ENCODE measurements at regions of chr14 and their contacts with region 1.

Region 1: GRCh38 chr14:76956316-76957090 is 72.0 kb downstream of the IRF2BPL start:
- DNase-seq: peak; percentile 92 to 95
- ATAC-seq: peak; percentile 82

Region 2: GRCh38 chr14:76742966-76743365 is 213.5 kb before region 1 on chr14:
- intact Hi-C with region 1: no loop called
- DNase-seq: no peak
- ATAC-seq: no peak

Region 3: GRCh38 chr14:77023001-77023996 is 66.8 kb after region 1 on chr14:
- intact Hi-C with region 1: loop called in 1 of 2 experiments (anchors 5 kb)
- DNase-seq: peak; percentile 70 to 77
- ATAC-seq: peak; percentile 71

Region 4: DNA sequence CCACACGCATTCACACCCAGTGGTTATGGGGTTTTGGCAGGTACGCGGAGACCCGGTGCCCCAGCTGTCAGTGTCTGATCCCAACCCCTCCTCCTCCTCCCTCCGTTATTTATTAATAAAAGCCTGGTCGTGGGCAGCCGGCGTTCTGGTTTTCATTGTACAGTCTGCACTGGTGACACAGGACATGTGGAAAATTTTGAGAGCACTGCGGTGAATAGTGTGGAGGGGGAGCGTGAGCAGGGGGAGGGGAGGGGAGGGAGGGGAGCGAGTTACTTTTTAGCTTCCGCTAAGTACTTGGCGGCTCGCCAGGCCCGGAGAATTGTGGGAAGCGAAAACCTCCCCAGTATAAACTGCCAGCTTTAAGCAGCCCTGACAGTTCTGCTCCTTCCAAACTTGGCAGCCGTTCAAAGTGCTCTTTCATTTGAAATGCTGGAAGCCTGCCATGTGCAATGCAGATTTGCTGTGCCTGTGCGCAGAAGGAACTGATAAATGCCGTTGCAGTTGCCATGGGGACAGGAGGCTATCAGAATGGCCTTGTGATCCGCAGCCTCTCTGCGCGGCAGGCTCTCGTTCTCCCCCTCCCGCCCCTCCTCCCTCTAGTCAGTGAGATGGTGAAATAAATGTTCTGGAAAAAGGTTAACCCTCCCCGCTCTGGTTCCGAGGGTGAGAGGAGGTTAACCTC is 83.7 kb after region 1 on chr14:
- intact Hi-C with region 1: loop called in 1 of 2 experiments (anchors 5 kb)
- DNase-seq: peak; percentile 99 to 100
- ATAC-seq: peak; percentile 90

Region 5: DNA sequence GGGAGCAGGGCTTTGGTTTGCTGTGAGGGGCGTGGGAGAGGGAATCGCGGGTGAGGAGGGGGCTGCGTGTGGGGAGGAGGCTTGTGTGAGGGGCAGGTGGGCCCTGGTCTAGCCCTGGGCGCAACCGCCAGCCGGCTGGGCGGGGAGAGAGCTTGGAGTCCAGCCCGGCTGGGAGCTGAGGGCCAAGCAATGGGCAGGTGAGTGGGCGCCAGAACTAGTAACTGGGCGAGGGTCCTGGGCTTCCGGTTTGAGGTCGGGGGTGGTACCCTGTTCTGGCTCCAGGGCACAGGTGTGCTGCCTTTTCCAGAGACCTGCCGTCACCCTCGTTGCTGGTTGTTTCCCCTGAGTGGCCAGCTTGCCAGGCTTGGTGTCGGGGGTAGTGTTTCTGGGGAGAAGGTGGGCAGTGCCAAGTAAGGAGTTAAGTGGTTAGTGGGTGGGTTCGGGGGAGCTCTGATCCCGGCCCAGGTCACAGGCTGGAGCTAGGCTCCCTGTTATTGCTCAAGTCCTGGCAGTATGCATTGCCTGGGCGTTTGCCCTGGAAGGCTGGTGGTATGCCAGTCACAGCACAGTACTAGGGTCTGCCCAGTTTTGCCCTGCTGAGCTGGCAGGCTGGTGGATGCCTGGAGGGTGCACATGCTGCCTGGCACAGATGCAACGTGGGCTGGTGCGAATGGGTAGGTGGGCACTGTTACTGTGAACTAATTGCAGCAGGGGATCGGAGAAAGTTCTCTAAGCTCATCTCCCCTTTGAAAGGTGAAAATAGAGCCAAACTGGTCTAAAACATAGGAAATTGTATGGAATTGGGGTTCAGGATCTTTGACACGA is 142.2 kb after region 1 on chr14:
- intact Hi-C with region 1: no loop called
- DNase-seq: peak; percentile 68 to 69
- ATAC-seq: peak; percentile 35

Region 6: GRCh38 chr14:77151918-77152588 is 195.6 kb after region 1 on chr14:
- intact Hi-C with region 1: no loop called
- DNase-seq: no peak
- ATAC-seq: peak; percentile 73

Measured in left colon (tissue), 2 donors.